Activated CD4-positive, alpha-beta memory T cell treated with anti-CD3 and anti-CD28 coated beads for 36 hours (primary cell): ENCODE measurements at regions of chr1 and their contacts with region 1.

Region 1: GRCh38 chr1:174982971-174983689 is 16.6 kb upstream of the CACYBP start:
- DNase-seq: peak; percentile 42
- H3K4me3 Mint-ChIP-seq: no peak overlapping the region
- H3K27ac Mint-ChIP-seq: no peak overlapping the region
- H3K4me1 Mint-ChIP-seq: peaks cover 20% of the 10 kb centered on the region
- H3K27me3 Mint-ChIP-seq: no peaks in the 10 kb centered on the region

Region 2: DNA sequence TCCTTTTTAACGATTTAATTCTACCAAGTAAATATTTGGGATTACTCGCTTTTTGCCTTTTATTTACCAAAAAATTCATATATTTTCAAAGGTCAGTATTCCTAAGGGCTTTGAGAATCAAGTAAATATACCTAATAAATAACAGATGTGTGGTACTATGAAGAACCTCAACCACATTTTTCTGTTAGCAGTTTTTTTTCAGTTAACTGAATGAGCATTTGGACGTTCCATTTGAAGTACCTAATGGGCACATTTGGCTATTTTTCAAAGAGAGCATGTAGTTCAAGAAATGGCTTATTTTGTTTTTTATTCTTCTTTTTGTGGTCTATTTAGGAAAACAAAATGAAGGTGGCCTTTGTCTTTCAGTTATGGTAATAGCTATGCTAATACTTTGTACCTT is 282.4 kb before region 1 on chr1:
- CTCF ChIA-PET with region 1: no interaction called
- POLR2A ChIA-PET with region 1: no interaction called
- intact Hi-C with region 1: no loop called
- DNase-seq: no peak
- H3K4me3 Mint-ChIP-seq: no peak overlapping the region
- H3K27ac Mint-ChIP-seq: no peak overlapping the region
- H3K4me1 Mint-ChIP-seq: no peaks in the 10 kb centered on the region
- H3K27me3 Mint-ChIP-seq: no peaks in the 10 kb centered on the region

Region 3: GRCh38 chr1:174769961-174770549 is 213.1 kb before region 1 on chr1:
- CTCF ChIA-PET with region 1: interaction called, 24 read pairs
- POLR2A ChIA-PET with region 1: no interaction called
- intact Hi-C with region 1: loop called (anchors 1 kb)
- DNase-seq: no peak
- H3K4me3 Mint-ChIP-seq: no peak overlapping the region
- H3K27ac Mint-ChIP-seq: no peak overlapping the region
- H3K4me1 Mint-ChIP-seq: peaks cover 5% of the 10 kb centered on the region
- H3K27me3 Mint-ChIP-seq: no peaks in the 10 kb centered on the region

Region 4: DNA sequence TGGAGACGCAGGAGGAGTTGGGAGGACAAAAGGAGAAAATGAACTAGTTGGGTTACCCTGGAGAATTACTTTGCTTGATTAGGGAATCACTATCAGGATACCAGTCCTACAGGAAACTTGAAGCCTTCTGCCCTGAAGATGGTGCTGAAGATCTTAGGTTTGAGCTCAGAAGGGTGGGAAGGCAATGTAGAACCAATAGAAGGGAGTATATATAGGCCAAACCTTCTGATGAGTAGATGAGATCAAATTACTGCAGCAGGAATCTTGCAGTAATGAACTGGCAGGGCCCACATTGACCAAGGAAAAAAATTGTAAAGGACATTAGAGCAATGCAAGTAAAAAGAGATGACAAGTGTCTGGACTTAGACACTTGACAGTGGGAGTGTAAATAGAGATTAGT is 99.7 kb before region 1 on chr1:
- CTCF ChIA-PET with region 1: interaction called, 6 read pairs
- POLR2A ChIA-PET with region 1: no interaction called
- intact Hi-C with region 1: loop called (anchors 2 kb)
- DNase-seq: no peak
- H3K4me3 Mint-ChIP-seq: no peak overlapping the region
- H3K27ac Mint-ChIP-seq: no peak overlapping the region
- H3K4me1 Mint-ChIP-seq: no peaks in the 10 kb centered on the region
- H3K27me3 Mint-ChIP-seq: no peaks in the 10 kb centered on the region

Region 5: DNA sequence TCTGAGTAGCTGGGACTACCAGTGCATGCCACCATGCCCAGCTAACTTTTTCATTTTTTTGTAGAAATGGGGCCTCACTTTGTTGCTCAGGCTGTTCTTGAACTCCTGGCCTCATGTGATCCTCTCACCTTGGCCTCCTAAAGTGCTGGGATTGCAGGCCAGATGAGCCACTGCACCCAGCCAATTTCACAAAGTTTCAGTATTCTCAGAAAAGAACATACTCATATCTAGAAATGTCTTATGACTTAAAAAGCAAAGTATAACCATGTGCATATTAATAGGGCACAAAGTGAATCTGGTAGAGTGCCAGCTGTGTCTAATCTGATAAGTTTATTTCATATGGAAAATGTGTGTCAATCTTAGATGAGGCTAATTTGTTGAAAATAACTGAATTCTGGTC is 70.9 kb before region 1 on chr1:
- CTCF ChIA-PET with region 1: interaction called, 9 read pairs
- POLR2A ChIA-PET with region 1: no interaction called
- intact Hi-C with region 1: loop called (anchors 2 kb)
- DNase-seq: peak; percentile 69
- H3K4me3 Mint-ChIP-seq: no peak overlapping the region
- H3K27ac Mint-ChIP-seq: peak overlapping the region; percentile 33
- H3K4me1 Mint-ChIP-seq: peaks cover 59% of the 10 kb centered on the region
- H3K27me3 Mint-ChIP-seq: no peaks in the 10 kb centered on the region

Region 6: DNA sequence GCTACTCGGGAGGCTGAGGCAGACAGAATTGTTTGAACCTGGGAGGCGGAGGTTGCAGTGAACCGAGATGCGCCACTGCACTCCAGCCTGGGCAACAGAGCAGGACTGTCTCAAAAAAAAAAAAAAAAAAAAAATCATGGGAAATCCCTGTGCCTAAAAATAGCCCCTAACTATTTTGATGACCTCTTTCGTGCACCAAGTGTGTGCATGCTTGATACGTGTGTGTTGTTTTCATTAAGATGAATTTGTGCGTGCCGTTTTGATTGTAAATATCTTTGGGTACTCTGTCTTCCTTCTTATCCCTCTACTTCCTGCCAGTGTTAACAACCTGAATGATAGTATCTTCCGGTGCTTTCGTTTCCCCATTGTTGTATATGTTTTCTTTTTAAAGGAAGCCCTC is 26.4 kb after region 1 on chr1:
- CTCF ChIA-PET with region 1: no interaction called
- POLR2A ChIA-PET with region 1: no interaction called
- intact Hi-C with region 1: no loop called
- DNase-seq: no peak
- H3K4me3 Mint-ChIP-seq: no peak overlapping the region
- H3K27ac Mint-ChIP-seq: peak overlapping the region; percentile 10
- H3K4me1 Mint-ChIP-seq: peaks cover 18% of the 10 kb centered on the region
- H3K27me3 Mint-ChIP-seq: no peaks in the 10 kb centered on the region

Region 7: GRCh38 chr1:175099916-175100315 is 116.8 kb after region 1 on chr1:
- CTCF ChIA-PET with region 1: no interaction called
- POLR2A ChIA-PET with region 1: no interaction called
- intact Hi-C with region 1: no loop called
- DNase-seq: no peak
- H3K4me3 Mint-ChIP-seq: no peak overlapping the region
- H3K27ac Mint-ChIP-seq: no peak overlapping the region
- H3K4me1 Mint-ChIP-seq: no peaks in the 10 kb centered on the region
- H3K27me3 Mint-ChIP-seq: no peaks in the 10 kb centered on the region

Region 8: DNA sequence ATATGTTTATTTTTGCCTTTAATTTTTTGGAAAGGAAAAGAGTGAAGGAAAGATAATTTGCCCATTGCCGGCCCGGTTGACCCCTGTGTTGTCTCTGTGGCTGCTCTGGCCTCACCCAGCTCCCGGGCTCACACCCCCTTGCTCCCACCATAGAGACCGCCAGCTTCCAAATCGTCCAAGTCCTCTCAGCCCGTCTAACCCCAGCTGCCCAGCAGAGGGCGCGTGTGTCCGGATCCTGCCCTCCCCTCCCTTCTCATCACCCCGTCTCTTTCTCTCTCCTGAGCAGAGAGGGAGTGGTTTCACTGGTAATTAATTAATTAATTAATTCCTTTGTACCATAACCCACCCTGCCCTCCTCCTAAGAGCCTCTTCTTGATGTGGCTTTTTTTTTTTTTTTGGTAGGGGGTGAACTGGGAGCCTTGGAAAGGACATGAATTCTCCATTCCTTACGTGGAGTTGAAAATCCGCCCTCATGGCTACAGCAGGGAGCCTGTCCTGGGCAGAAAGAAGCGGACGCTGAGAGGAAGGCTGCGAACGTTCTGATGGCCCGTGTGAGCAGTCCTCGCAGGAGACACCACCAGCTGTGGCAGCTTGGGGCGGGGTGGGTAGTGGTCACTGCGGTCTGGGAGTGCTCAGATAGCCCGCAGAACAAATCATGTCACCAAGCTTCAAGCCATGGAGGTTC is 163.5 kb after region 1 on chr1:
- CTCF ChIA-PET with region 1: no interaction called
- POLR2A ChIA-PET with region 1: no interaction called
- intact Hi-C with region 1: no loop called
- DNase-seq: peak; percentile 80
- H3K4me3 Mint-ChIP-seq: no peak overlapping the region
- H3K27ac Mint-ChIP-seq: no peak overlapping the region
- H3K4me1 Mint-ChIP-seq: peaks cover 6% of the 10 kb centered on the region
- H3K27me3 Mint-ChIP-seq: peaks cover 13% of the 10 kb centered on the region